Right cardiac atrium (tissue), 5 donors: ENCODE measurements at regions of chr2 and their contacts with region 1.

Region 1: GRCh38 chr2:152189622-152190495 is 14.3 kb upstream of the STAM2 start:
- DNase-seq: peak in 2 of 3 donors; percentile 27 to 55
- ATAC-seq: peak; percentile 81 to 84
- H3K4me3 ChIP-seq: no peak overlapping the region
- H3K27ac ChIP-seq: no peak overlapping the region
- H3K4me1 ChIP-seq: no peaks in the 10 kb centered on the region
- H3K27me3 ChIP-seq: no peaks in the 10 kb centered on the region

Region 2: GRCh38 chr2:152627351-152627957 is 437.6 kb after region 1 on chr2:
- intact Hi-C with region 1: loop called in 3 of 4 experiments (anchors 5 kb)
- DNase-seq: no peak
- ATAC-seq: peak; percentile 61 to 66
- H3K4me3 ChIP-seq: no peak overlapping the region
- H3K27ac ChIP-seq: no peak overlapping the region
- H3K4me1 ChIP-seq: no peaks in the 10 kb centered on the region
- H3K27me3 ChIP-seq: no peaks in the 10 kb centered on the region

Region 3: DNA sequence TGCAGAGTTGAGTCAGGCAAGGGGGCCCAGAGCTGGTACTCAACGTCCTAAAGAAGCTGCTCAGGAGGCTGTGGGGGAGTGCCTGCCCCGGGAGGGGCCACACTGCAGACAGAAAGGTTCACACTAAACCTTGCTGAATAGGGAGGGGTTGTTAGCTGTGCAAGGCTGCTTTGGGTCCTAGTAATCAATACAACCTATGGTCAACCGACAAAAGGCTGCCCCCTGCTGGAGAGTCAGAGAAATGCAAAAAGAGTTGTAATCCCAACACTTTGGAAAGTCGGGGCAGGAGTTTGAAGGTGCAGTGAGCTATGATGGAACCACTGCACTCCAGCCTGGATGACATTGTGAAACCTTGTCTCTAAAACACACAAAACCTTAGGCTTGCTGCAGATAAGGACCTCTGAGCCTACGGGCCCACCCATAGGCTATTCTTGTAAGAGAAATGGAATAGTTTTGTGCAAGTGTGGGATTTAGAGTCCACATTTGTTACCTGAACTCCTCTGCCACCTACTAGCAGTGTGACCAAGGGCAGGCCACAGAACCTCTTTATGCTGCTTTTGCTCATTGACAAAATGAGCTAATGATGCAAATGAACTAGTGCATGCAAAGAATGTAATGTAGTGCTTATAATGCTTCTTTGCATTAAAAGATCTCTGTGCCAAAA is 445.9 kb after region 1 on chr2:
- intact Hi-C with region 1: loop called in 1 of 4 experiments (anchors 5 kb)
- DNase-seq: peak; percentile 47 to 58 (median 53)
- ATAC-seq: peak; percentile 44 to 66
- H3K4me3 ChIP-seq: no peak overlapping the region
- H3K27ac ChIP-seq: no peak overlapping the region
- H3K4me1 ChIP-seq: no peaks in the 10 kb centered on the region
- H3K27me3 ChIP-seq: no peaks in the 10 kb centered on the region